Mammary epithelial cell (primary cell): ENCODE measurements at regions of chr12 and their contacts with region 1.

Region 1: GRCh38 chr12:9331218-9331626 is 123.0 kb upstream of the PZP start:
- DNase-seq: peak; percentile 54
- H3K4me3 ChIP-seq: no peak overlapping the region
- H3K27ac ChIP-seq: no peak overlapping the region
- H3K4me1 ChIP-seq: peaks cover 5% of the 10 kb centered on the region
- H3K27me3 ChIP-seq: no peaks in the 10 kb centered on the region
- CTCF ChIP-seq: peak; percentile 98

Region 2: DNA sequence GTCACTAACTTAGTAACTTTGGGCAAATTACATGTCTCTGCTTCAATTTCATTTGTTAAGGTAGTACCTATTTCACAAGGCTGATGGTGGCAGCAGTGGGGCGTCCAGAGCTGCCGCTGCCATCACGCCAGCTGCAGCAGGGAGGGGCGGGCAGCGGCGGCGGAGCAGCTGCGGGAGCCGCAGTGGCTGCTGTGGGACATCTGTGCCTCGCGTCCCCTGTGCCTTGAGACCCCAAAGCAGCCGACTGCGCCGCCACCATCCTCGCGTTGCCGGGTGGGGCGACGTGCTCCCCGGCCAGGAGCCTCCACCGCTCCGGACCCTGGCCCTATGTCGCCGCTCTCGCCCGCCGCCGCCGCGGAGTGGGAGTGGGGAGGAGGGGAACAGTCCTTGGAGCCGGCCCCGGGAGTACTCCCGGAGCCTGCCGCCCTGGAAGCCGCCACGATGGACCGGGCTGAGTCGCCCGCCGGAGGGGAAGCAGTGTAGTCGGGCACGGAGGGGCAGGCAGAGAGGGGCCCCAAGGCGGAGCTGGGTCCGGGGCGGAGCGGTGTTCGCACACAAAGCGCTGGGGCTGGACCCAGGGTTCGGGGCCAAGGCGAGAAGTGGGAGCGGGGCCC is 266.9 kb before region 1 on chr12:
- CTCF ChIA-PET with region 1: no interaction called
- dilution Hi-C with region 1: no loop called
- in situ Hi-C with region 1: no loop called
- intact Hi-C with region 1: loop called (anchors 2 kb)
- DNase-seq: peak; percentile 62
- H3K4me3 ChIP-seq: peak overlapping the region; percentile 70 to 97 (median 88)
- H3K27ac ChIP-seq: peak overlapping the region; percentile 80
- H3K4me1 ChIP-seq: peaks cover 30% of the 10 kb centered on the region
- H3K27me3 ChIP-seq: no peaks in the 10 kb centered on the region
- CTCF ChIP-seq: peak; percentile 19 to 70

Region 3: GRCh38 chr12:9256341-9256740 is 74.9 kb before region 1 on chr12:
- CTCF ChIA-PET with region 1: no interaction called
- dilution Hi-C with region 1: no loop called
- in situ Hi-C with region 1: no loop called
- intact Hi-C with region 1: no loop called
- DNase-seq: no peak
- H3K4me3 ChIP-seq: no peak overlapping the region
- H3K27ac ChIP-seq: no peak overlapping the region
- H3K4me1 ChIP-seq: no peaks in the 10 kb centered on the region
- H3K27me3 ChIP-seq: peaks cover 2% of the 10 kb centered on the region
- CTCF ChIP-seq: no peak

Region 4: DNA sequence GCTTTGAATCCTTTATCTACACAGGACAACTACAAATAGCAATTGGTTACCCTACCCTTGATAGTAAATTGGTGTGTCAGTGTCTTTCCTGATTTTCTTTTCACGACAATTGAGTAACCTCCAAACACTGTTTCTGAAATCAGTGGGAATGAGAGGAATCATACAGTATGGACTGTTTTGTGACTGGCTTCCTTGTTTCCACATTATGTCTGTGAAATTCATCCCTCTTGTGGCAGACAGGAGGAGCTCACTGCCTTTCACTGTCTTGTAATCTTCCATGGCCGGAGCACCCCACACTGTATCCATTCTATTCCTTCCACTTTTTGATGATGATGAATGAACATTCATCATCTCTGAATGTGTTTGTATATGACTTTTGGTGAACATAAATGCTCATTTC is 41.0 kb after region 1 on chr12:
- CTCF ChIA-PET with region 1: interaction called, 8 read pairs
- dilution Hi-C with region 1: loop called (anchors 5 kb)
- in situ Hi-C with region 1: loop called in 1 of 2 experiments (anchors 5 kb)
- intact Hi-C with region 1: loop called (anchors 1 kb)
- DNase-seq: peak; percentile 34
- H3K4me3 ChIP-seq: no peak overlapping the region
- H3K27ac ChIP-seq: no peak overlapping the region
- H3K4me1 ChIP-seq: no peaks in the 10 kb centered on the region
- H3K27me3 ChIP-seq: no peaks in the 10 kb centered on the region
- CTCF ChIP-seq: peak; percentile 23 to 56

Region 5: GRCh38 chr12:9464408-9464807 is 133.2 kb after region 1 on chr12:
- CTCF ChIA-PET with region 1: interaction called, 17 read pairs
- dilution Hi-C with region 1: no loop called
- in situ Hi-C with region 1: no loop called
- intact Hi-C with region 1: no loop called
- DNase-seq: no peak
- H3K4me3 ChIP-seq: no peak overlapping the region
- H3K27ac ChIP-seq: no peak overlapping the region
- H3K4me1 ChIP-seq: no peaks in the 10 kb centered on the region
- H3K27me3 ChIP-seq: no peaks in the 10 kb centered on the region
- CTCF ChIP-seq: no peak

Region 6: GRCh38 chr12:9707864-9708808 is 376.9 kb after region 1 on chr12:
- CTCF ChIA-PET with region 1: no interaction called
- dilution Hi-C with region 1: no loop called
- in situ Hi-C with region 1: loop called in 1 of 2 experiments (anchors 25 kb)
- intact Hi-C with region 1: loop called (anchors 1 kb)
- DNase-seq: peak; percentile 29
- H3K4me3 ChIP-seq: no peak overlapping the region
- H3K27ac ChIP-seq: no peak overlapping the region
- H3K4me1 ChIP-seq: peaks cover 4% of the 10 kb centered on the region
- H3K27me3 ChIP-seq: no peaks in the 10 kb centered on the region
- CTCF ChIP-seq: peak; percentile 78 to 82